ENCODE measurements at regions of chr4 and their contacts with region 1.

Region 1: GRCh38 chr4:153466081-153466948 is at the start of gene TMEM131L:
- DNase-seq: peak; percentile 68
- H3K4me3 ChIP-seq: peak within 1 kb of the TSS; percentile 83 to 93 (median 92)
- H3K27ac ChIP-seq: peak within 1 kb of the TSS; percentile 40
- H3K4me1 ChIP-seq: peaks cover 23% of the 10 kb centered on the region
- H3K27me3 ChIP-seq: no peaks in the 10 kb centered on the region
- CTCF ChIP-seq: peak in 1 of 2 donors; percentile 17
- POLR2A ChIP-seq: no peak
- total RNA-seq, gene TMEM131L: 19.1 and 21.2 TPM in 2 replicates

Region 2: GRCh38 chr4:152328596-152328995 is 1137.7 kb before region 1 on chr4:
- CTCF ChIA-PET with region 1: no interaction called
- POLR2A ChIA-PET with region 1: no interaction called
- dilution Hi-C with region 1: no loop called
- intact Hi-C with region 1: no loop called
- DNase-seq: no peak
- H3K4me3 ChIP-seq: no peak overlapping the region
- H3K27ac ChIP-seq: no peak overlapping the region
- H3K4me1 ChIP-seq: no peaks in the 10 kb centered on the region
- H3K27me3 ChIP-seq: no peaks in the 10 kb centered on the region
- CTCF ChIP-seq: no peak
- POLR2A ChIP-seq: no peak

Region 3: DNA sequence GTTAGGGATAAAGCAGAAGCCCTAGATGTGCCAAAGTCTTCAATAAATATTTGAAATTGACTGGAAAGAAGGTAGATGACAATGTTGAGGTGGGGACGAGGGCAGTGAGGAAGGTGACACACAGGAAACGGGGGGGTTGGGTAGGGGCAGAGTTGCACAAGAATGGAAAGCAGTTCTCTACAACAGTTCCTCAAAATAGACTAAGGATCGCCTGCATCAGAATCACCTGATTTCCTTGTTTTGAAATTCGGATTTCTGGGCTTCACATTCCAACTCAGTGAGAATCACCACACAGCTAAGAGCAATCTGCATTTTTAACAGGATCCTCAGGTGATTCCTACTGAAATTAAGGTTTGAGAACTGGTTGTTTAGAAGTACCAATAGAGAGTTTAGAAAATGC is 615.9 kb before region 1 on chr4:
- CTCF ChIA-PET with region 1: no interaction called
- POLR2A ChIA-PET with region 1: no interaction called
- dilution Hi-C with region 1: no loop called
- intact Hi-C with region 1: no loop called
- DNase-seq: no peak
- H3K4me3 ChIP-seq: no peak overlapping the region
- H3K27ac ChIP-seq: no peak overlapping the region
- H3K4me1 ChIP-seq: peaks cover 7% of the 10 kb centered on the region
- H3K27me3 ChIP-seq: no peaks in the 10 kb centered on the region
- CTCF ChIP-seq: no peak
- POLR2A ChIP-seq: no peak

Region 4: GRCh38 chr4:153153339-153153871 is 312.9 kb before region 1 on chr4:
- CTCF ChIA-PET with region 1: no interaction called
- POLR2A ChIA-PET with region 1: no interaction called
- dilution Hi-C with region 1: no loop called
- intact Hi-C with region 1: loop called (anchors 5 kb)
- DNase-seq: peak; percentile 27
- H3K4me3 ChIP-seq: peak overlapping the region; percentile 8 to 63 (median 50)
- H3K27ac ChIP-seq: no peak overlapping the region
- H3K4me1 ChIP-seq: peaks cover 18% of the 10 kb centered on the region
- H3K27me3 ChIP-seq: peaks cover 17 to 31% of the 10 kb centered on the region in 2 experiments
- CTCF ChIP-seq: no peak
- POLR2A ChIP-seq: no peak

Region 5: GRCh38 chr4:153344131-153345010 is 121.9 kb before region 1 on chr4 and contains the start of gene MND1:
- CTCF ChIA-PET with region 1: interaction called, 12 read pairs
- POLR2A ChIA-PET with region 1: interaction called, 4 read pairs
- dilution Hi-C with region 1: no loop called
- intact Hi-C with region 1: loop called (anchors 1 kb)
- DNase-seq: peak; percentile 77
- H3K4me3 ChIP-seq: peak within 1 kb of the TSS; percentile 54 to 82 (median 76)
- H3K27ac ChIP-seq: peak within 1 kb of the TSS; percentile 78
- H3K4me1 ChIP-seq: peaks cover 25% of the 10 kb centered on the region
- H3K27me3 ChIP-seq: no peaks in the 10 kb centered on the region
- CTCF ChIP-seq: peak; percentile 77 to 87
- POLR2A ChIP-seq: no peak
- total RNA-seq, gene MND1: 7.7 and 8.2 TPM in 2 replicates

Region 6: GRCh38 chr4:153479101-153479500 is 12.8 kb after region 1 on chr4:
- CTCF ChIA-PET with region 1: interaction called, 19 read pairs
- POLR2A ChIA-PET with region 1: no interaction called
- dilution Hi-C with region 1: no loop called
- intact Hi-C with region 1: no loop called
- DNase-seq: no peak
- H3K4me3 ChIP-seq: no peak overlapping the region
- H3K27ac ChIP-seq: no peak overlapping the region
- H3K4me1 ChIP-seq: no peaks in the 10 kb centered on the region
- H3K27me3 ChIP-seq: no peaks in the 10 kb centered on the region
- CTCF ChIP-seq: no peak
- POLR2A ChIP-seq: no peak

Region 7: GRCh38 chr4:153488006-153488891 is 21.9 kb after region 1 on chr4:
- CTCF ChIA-PET with region 1: interaction called, 9 read pairs
- POLR2A ChIA-PET with region 1: no interaction called
- dilution Hi-C with region 1: no loop called
- intact Hi-C with region 1: loop called (anchors 2 kb)
- DNase-seq: peak; percentile 50
- H3K4me3 ChIP-seq: no peak overlapping the region
- H3K27ac ChIP-seq: no peak overlapping the region
- H3K4me1 ChIP-seq: peaks cover 28% of the 10 kb centered on the region
- H3K27me3 ChIP-seq: no peaks in the 10 kb centered on the region
- CTCF ChIP-seq: no peak
- POLR2A ChIP-seq: no peak

Region 8: DNA sequence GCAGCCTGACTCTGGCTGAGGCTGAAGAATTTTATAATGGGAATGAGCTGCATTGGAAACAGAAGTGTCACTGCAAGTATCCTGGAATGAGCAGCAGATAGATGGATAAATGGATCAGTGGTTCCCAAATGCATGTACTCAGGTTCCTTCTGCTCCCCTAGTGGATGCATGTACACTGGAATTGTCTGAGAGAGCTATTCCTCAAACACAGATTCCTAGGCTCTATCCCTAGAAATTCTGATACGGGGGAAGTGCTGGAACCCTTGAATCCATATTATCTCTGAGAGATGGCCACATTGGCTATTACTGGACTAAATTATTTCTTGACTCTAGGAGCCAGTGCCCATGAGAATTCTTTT is 64.7 kb after region 1 on chr4:
- CTCF ChIA-PET with region 1: interaction called, 6 read pairs
- POLR2A ChIA-PET with region 1: interaction called, 3 read pairs
- dilution Hi-C with region 1: no loop called
- intact Hi-C with region 1: loop called (anchors 1 kb)
- DNase-seq: no peak
- H3K4me3 ChIP-seq: no peak overlapping the region
- H3K27ac ChIP-seq: no peak overlapping the region
- H3K4me1 ChIP-seq: peaks cover 25% of the 10 kb centered on the region
- H3K27me3 ChIP-seq: no peaks in the 10 kb centered on the region
- CTCF ChIP-seq: peak in 1 of 2 donors; percentile 1
- POLR2A ChIP-seq: no peak

Region 9: GRCh38 chr4:153555730-153556433 is 89.6 kb after region 1 on chr4:
- CTCF ChIA-PET with region 1: interaction called, 3 read pairs
- POLR2A ChIA-PET with region 1: interaction called, 4 read pairs
- dilution Hi-C with region 1: no loop called
- intact Hi-C with region 1: loop called (anchors 5 kb)
- DNase-seq: peak; percentile 90
- H3K4me3 ChIP-seq: no peak overlapping the region
- H3K27ac ChIP-seq: no peak overlapping the region
- H3K4me1 ChIP-seq: no peaks in the 10 kb centered on the region
- H3K27me3 ChIP-seq: no peaks in the 10 kb centered on the region
- CTCF ChIP-seq: no peak
- POLR2A ChIP-seq: no peak

Measured in endothelial cell of umbilical vein (primary cell).